ENCODE measurements at regions of chr11 and their contacts with region 1.

Region 1: GRCh38 chr11:74702383-74703007 is 28.7 kb downstream of the CHRDL2 start:
- DNase-seq: peak; percentile 45
- H3K4me3 Mint-ChIP-seq: no peak overlapping the region
- H3K27ac Mint-ChIP-seq: no peak overlapping the region
- H3K4me1 Mint-ChIP-seq: peaks cover under 1% of the 10 kb centered on the region
- H3K27me3 Mint-ChIP-seq: peaks cover 3% of the 10 kb centered on the region

Region 2: GRCh38 chr11:74662487-74663103 is 39.9 kb before region 1 on chr11:
- intact Hi-C with region 1: no loop called
- DNase-seq: no peak
- H3K4me3 Mint-ChIP-seq: no peak overlapping the region
- H3K27ac Mint-ChIP-seq: no peak overlapping the region
- H3K4me1 Mint-ChIP-seq: no peaks in the 10 kb centered on the region
- H3K27me3 Mint-ChIP-seq: no peaks in the 10 kb centered on the region

Region 3: GRCh38 chr11:74870485-74870884 is 168.0 kb after region 1 on chr11:
- intact Hi-C with region 1: loop called (anchors 1 kb)
- DNase-seq: no peak
- H3K4me3 Mint-ChIP-seq: no peak overlapping the region
- H3K27ac Mint-ChIP-seq: no peak overlapping the region
- H3K4me1 Mint-ChIP-seq: no peaks in the 10 kb centered on the region
- H3K27me3 Mint-ChIP-seq: no peaks in the 10 kb centered on the region